H1 (cell line): ENCODE measurements at regions of chr19 and their contacts with region 1.

Region 1: DNA sequence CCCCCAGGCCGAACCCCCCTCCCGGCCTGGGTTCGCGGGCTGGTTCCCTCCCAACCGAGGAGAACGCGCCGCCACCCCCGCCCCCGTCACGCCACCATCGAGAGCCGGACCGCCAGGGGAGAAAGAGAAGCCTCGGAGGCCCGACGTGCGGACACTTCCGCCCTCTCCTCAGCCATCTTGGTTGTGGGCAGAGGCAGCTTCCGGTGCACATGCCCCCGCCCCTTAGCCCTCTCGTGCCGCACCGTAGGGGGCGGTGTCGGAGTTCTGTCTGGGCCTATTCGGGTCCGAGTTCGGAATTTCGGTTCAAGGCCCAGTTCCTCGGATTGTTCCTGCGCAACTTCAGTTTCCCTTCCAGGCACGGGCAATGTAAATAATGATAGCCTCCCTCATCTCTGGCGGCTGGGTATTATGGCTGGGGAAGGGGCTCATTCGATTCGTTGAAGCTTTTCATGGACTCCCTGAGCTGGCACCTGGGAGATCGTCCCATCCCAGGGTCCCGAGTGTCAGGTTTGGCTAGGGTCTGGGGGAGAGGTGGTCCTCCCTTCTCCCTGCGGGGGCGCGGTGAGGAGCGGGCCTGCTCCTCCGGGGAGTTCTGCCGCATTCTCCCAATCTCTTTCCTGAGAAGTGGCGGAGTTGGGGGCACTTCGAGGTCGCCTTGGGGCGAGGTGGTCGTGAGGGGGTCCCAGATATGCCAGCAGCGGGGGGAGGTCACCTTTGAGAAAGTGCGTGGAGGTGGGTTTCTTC is at the starts of genes IER2 and STX10:
- DNase-seq: peak in 1 of 2 experiments; percentile 91
- H3K4me3 ChIP-seq: peak within 1 kb of the TSS; percentile 87 to 97 (median 94)
- H3K27ac ChIP-seq: peak within 1 kb of the TSS; percentile 79
- H3K4me1 ChIP-seq: peaks cover 0 to 6% (median 3%) of the 10 kb centered on the region in 4 experiments; a peak in 3 of 7 replicates
- H3K27me3 ChIP-seq: no peaks in the 10 kb centered on the region; a peak in 1 of 7 replicates
- CTCF ChIP-seq: peak in 1 of 3 experiments; percentile 33; a peak in 2 of 4 replicates
- EP300 ChIP-seq: peak in 1 of 2 experiments; percentile 43; a peak in 1 of 3 replicates
- POLR2A ChIP-seq: no peak; a peak in 1 of 3 replicates
- RAD21 ChIP-seq: peak; percentile 12 to 18; a peak in 2 of 4 replicates
- total RNA-seq, gene IER2: 137 and 138 TPM in 2 replicates
- total RNA-seq, gene STX10: 50.8 and 53.0 TPM in 2 replicates

Region 2: GRCh38 chr19:13117772-13118423 is 32.5 kb before region 1 on chr19 and contains the start of gene NACC1:
- CTCF ChIA-PET with region 1: interaction called, 3 read pairs
- POLR2A ChIA-PET with region 1: interaction called, 126 read pairs
- DNase-seq: peak; percentile 70 to 87
- H3K4me3 ChIP-seq: peak within 1 kb of the TSS; percentile 92 to 100 (median 96)
- H3K27ac ChIP-seq: peak within 1 kb of the TSS; percentile 97
- H3K4me1 ChIP-seq: peaks cover 14 to 36% (median 26%) of the 10 kb centered on the region in 4 experiments
- H3K27me3 ChIP-seq: no peaks in the 10 kb centered on the region
- CTCF ChIP-seq: no peak
- EP300 ChIP-seq: peak in 1 of 2 experiments; percentile 13; a peak in 1 of 3 replicates
- POLR2A ChIP-seq: no peak; a peak in 1 of 3 replicates
- RAD21 ChIP-seq: no peak
- total RNA-seq, gene NACC1: 226 and 234 TPM in 2 replicates

Region 3: GRCh38 chr19:13162518-13163314 is 12.4 kb after region 1 on chr19:
- CTCF ChIA-PET with region 1: interaction called, 8 read pairs
- POLR2A ChIA-PET with region 1: interaction called, 530 read pairs
- DNase-seq: peak; percentile 92 to 96
- H3K4me3 ChIP-seq: peak overlapping the region; percentile 13 to 62 (median 46); a peak in 7 of 8 replicates
- H3K27ac ChIP-seq: peak overlapping the region; percentile 95
- H3K4me1 ChIP-seq: peaks cover 16 to 31% (median 18%) of the 10 kb centered on the region in 4 experiments
- H3K27me3 ChIP-seq: no peaks in the 10 kb centered on the region
- CTCF ChIP-seq: no peak
- EP300 ChIP-seq: no peak
- POLR2A ChIP-seq: peak; percentile 17 to 66; a peak in 2 of 3 replicates
- RAD21 ChIP-seq: no peak; a peak in 1 of 4 replicates

Region 4: DNA sequence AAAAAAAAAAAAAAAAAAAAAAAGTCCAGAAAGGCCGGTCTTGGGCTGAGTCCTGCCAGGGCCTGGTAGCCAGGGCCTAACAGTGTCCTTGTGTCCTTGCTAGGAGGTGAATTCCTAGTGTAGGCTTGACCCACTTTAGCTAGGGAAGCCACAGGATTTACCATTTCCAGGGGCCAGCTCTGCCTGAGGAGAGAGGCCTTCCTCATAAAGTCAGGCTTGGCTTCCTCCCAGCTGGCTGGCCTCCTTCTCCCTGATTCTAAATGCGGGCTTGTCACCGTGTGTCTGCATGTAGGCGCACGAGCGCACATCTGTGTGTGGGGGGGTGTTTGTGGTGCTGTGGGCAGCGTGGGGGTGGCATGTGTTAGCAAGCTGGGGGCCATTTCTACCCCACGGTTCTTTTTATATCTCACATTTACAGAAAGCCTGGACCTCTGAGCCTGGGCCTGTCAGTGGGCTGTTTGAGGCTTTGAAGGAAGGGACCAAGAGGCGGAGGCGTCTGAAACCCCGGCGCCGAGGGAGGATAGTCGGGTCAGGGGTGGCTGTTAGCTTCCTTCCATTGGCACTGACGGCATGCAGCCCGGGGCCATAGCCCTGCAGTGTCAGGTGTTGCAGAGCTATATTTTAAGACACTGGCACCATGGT is 31.5 kb after region 1 on chr19:
- CTCF ChIA-PET with region 1: no interaction called
- POLR2A ChIA-PET with region 1: interaction called, 41 read pairs
- DNase-seq: no peak
- H3K4me3 ChIP-seq: no peak overlapping the region
- H3K27ac ChIP-seq: no peak overlapping the region
- H3K4me1 ChIP-seq: peaks cover 0 to 2% (median 1%) of the 10 kb centered on the region in 4 experiments; a peak in 2 of 7 replicates
- H3K27me3 ChIP-seq: no peaks in the 10 kb centered on the region
- CTCF ChIP-seq: no peak
- EP300 ChIP-seq: no peak
- POLR2A ChIP-seq: no peak
- RAD21 ChIP-seq: no peak

Region 5: GRCh38 chr19:13212759-13213330 is 62.5 kb after region 1 on chr19:
- CTCF ChIA-PET with region 1: no interaction called
- POLR2A ChIA-PET with region 1: interaction called, 16 read pairs
- DNase-seq: peak in 1 of 2 experiments; percentile 86
- H3K4me3 ChIP-seq: no peak overlapping the region
- H3K27ac ChIP-seq: no peak overlapping the region
- H3K4me1 ChIP-seq: peaks cover 0 to 10% (median 3%) of the 10 kb centered on the region in 4 experiments; a peak in 3 of 7 replicates
- H3K27me3 ChIP-seq: no peaks in the 10 kb centered on the region
- CTCF ChIP-seq: peak; percentile 69 to 88 (median 80)
- EP300 ChIP-seq: no peak
- POLR2A ChIP-seq: no peak
- RAD21 ChIP-seq: peak; percentile 50 to 61

Region 6: GRCh38 chr19:13303381-13304129 is 153.2 kb after region 1 on chr19:
- CTCF ChIA-PET with region 1: no interaction called
- POLR2A ChIA-PET with region 1: no interaction called
- DNase-seq: no peak
- H3K4me3 ChIP-seq: no peak overlapping the region
- H3K27ac ChIP-seq: no peak overlapping the region
- H3K4me1 ChIP-seq: no peaks in the 10 kb centered on the region
- H3K27me3 ChIP-seq: no peaks in the 10 kb centered on the region
- CTCF ChIP-seq: no peak
- EP300 ChIP-seq: no peak
- POLR2A ChIP-seq: no peak
- RAD21 ChIP-seq: no peak